H1 (cell line): ENCODE measurements at regions of chr3 and their contacts with region 1.

Region 1: GRCh38 chr3:53195602-53196574 is 34.9 kb downstream of the PRKCD start:
- DNase-seq: peak in 1 of 2 experiments; percentile 92
- H3K4me3 ChIP-seq: no peak overlapping the region
- H3K27ac ChIP-seq: no peak overlapping the region
- H3K4me1 ChIP-seq: peaks cover 0 to 19% (median 10%) of the 10 kb centered on the region in 4 experiments; a peak in 5 of 7 replicates
- H3K27me3 ChIP-seq: no peaks in the 10 kb centered on the region; a peak in 1 of 7 replicates
- CTCF ChIP-seq: peak in 2 of 3 experiments; percentile 95 to 97; a peak in 3 of 4 replicates
- EP300 ChIP-seq: no peak
- POLR2A ChIP-seq: no peak
- RAD21 ChIP-seq: peak; percentile 90 to 92

Region 2: GRCh38 chr3:53114011-53114400 is 81.9 kb before region 1 on chr3:
- CTCF ChIA-PET with region 1: interaction called, 122 read pairs
- POLR2A ChIA-PET with region 1: interaction called, 3 read pairs
- DNase-seq: peak; percentile 47 to 93
- H3K4me3 ChIP-seq: no peak overlapping the region
- H3K27ac ChIP-seq: no peak overlapping the region
- H3K4me1 ChIP-seq: no peaks in the 10 kb centered on the region
- H3K27me3 ChIP-seq: no peaks in the 10 kb centered on the region
- CTCF ChIP-seq: peak; percentile 90 to 95 (median 90)
- EP300 ChIP-seq: no peak
- POLR2A ChIP-seq: no peak
- RAD21 ChIP-seq: peak; percentile 93

Region 3: GRCh38 chr3:53140847-53141845 is 54.7 kb before region 1 on chr3:
- CTCF ChIA-PET with region 1: interaction called, 164 read pairs
- POLR2A ChIA-PET with region 1: interaction called, 22 read pairs
- DNase-seq: no peak
- H3K4me3 ChIP-seq: no peak overlapping the region
- H3K27ac ChIP-seq: no peak overlapping the region
- H3K4me1 ChIP-seq: no peaks in the 10 kb centered on the region; a peak in 1 of 7 replicates
- H3K27me3 ChIP-seq: no peaks in the 10 kb centered on the region
- CTCF ChIP-seq: no peak
- EP300 ChIP-seq: no peak
- POLR2A ChIP-seq: no peak
- RAD21 ChIP-seq: no peak

Region 4: DNA sequence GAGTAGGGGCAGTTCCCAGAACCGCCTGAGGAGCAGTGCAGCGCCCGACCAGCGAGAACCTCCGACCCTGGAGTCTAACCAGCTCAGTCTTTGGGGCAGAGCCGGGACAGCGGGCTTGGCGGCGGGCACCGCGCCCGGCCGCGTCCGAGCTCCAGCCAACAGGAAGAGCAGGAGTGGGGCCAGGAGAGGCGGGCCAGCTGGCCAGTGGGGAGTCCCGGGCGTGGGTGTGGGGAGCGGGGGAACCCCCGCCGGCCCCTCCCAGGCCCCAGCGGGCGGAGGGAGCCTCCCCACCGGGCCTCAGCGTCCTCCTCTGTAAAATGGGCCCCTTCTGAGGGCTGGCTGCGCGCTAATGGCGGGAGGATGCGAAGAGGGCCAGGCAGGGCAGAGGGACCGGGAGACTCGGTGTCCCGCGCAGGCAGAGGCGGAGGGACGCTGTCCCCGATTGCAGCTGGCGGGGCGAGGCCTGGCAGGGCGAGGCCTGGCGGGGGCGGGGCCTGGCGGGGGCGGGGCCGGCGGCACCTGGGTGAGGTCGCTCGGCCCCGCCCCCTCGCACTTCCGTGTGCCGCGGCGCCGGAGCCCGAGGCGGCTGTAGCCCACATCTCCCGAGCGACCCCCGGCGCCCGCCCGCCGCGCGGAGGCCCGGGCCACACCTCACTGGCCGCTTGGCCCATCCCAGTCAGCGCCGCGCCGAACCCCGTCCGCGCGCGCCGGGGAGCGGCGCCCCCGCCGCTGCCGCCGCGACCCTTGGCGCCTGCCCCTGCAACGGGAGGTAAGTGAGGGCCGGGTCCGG is 35.0 kb before region 1 on chr3 and contains the start of gene PRKCD:
- CTCF ChIA-PET with region 1: interaction called, 31 read pairs
- POLR2A ChIA-PET with region 1: interaction called, 6 read pairs
- DNase-seq: peak in 1 of 2 experiments; percentile 84
- H3K4me3 ChIP-seq: peak within 1 kb of the TSS; percentile 85 to 94 (median 92)
- H3K27ac ChIP-seq: no peak within 1 kb of the TSS
- H3K4me1 ChIP-seq: peaks cover 3 to 35% (median 21%) of the 10 kb centered on the region in 4 experiments
- H3K27me3 ChIP-seq: peaks cover 0 to 16% (median 6%) of the 10 kb centered on the region in 4 experiments; a peak in 3 of 7 replicates
- CTCF ChIP-seq: peak in 2 of 3 experiments; percentile 54 to 66; a peak in 3 of 4 replicates
- EP300 ChIP-seq: no peak
- POLR2A ChIP-seq: peak in 1 of 2 experiments; percentile 21; a peak in 1 of 3 replicates
- RAD21 ChIP-seq: peak; percentile 35
- total RNA-seq, gene PRKCD: 22.2 and 22.6 TPM in 2 replicates

Region 5: DNA sequence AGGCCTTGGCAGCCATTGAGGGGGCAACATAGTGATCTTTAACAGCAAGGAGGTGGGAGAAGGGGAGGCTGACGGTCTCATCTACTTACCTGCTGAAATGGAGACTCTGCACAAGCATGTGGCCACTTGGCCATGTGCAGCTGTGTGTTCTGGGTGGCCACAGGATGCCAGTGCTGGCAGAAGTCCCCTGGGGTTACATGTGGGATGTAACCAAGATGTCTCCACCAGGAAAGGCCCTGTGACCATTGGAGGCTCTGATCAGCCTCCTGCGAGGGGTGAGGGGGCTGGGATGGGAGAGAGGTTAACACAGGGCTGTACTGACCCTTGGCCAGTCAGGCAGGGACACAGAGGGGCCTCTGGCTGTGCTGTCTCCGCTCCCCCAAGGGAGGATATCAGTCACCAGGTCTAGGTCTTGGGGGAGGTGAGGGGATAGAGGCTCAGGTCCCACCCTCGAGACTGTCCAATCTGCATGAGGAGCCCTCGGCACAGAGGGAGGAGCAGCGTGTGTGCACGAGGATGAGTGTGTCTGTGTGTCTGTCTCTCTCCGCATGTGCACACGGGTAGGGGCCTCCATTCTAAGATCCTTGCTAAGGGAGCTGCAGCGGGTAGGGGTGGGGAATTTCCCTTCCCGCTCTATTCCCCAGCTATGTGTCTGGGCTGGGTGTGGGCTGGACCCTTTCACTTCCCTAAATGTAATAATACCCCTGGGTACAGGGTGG is 15.4 kb before region 1 on chr3:
- CTCF ChIA-PET with region 1: interaction called, 14 read pairs
- POLR2A ChIA-PET with region 1: no interaction called
- DNase-seq: no peak
- H3K4me3 ChIP-seq: no peak overlapping the region
- H3K27ac ChIP-seq: no peak overlapping the region
- H3K4me1 ChIP-seq: no peaks in the 10 kb centered on the region; a peak in 1 of 7 replicates
- H3K27me3 ChIP-seq: no peaks in the 10 kb centered on the region
- CTCF ChIP-seq: no peak
- EP300 ChIP-seq: no peak
- POLR2A ChIP-seq: no peak
- RAD21 ChIP-seq: no peak